Transverse colon (tissue), 4 donors: ENCODE measurements at regions of chr13 and their contacts with region 1.

Region 1: GRCh38 chr13:73465617-73465971 is 406.8 kb downstream of the KLF5 start:
- DNase-seq: peak; percentile 14
- H3K4me3 ChIP-seq: no peak overlapping the region
- H3K27ac ChIP-seq: peak overlapping the region; percentile 72 to 84 (median 82)
- H3K4me1 ChIP-seq: peaks cover 0 to 21% (median 11%) of the 10 kb centered on the region in 4 donors
- H3K27me3 ChIP-seq: no peaks in the 10 kb centered on the region
- CTCF ChIP-seq: peak in 4 of 5 experiments; percentile 11 to 61 (median 29)
- EP300 ChIP-seq: peak; percentile 2
- POLR2A ChIP-seq: no peak

Region 2: DNA sequence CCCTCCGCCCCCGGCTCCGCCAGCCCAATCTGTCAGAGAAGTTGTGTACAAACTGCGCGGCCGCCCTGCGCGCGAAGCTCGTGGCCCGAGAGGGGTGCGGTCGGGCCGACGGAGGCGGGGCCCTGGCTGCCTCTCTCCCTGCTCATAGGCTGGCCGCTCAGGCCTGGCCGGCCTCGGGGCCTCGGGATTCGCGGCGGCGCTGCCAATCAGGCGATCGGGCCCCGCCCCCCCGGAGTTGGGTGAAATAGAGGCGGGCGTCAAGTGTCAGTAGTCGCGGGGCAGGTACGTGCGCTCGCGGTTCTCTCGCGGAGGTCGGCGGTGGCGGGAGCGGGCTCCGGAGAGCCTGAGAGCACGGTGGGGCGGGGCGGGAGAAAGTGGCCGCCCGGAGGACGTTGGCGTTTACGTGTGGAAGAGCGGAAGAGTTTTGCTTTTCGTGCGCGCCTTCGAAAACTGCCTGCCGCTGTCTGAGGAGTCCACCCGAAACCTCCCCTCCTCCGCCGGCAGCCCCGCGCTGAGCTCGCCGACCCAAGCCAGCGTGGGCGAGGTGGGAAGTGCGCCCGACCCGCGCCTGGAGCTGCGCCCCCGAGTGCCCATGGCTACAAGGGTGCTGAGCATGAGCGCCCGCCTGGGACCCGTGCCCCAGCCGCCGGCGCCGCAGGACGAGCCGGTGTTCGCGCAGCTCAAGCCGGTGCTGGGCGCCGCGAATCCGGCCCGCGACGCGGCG is 406.7 kb before region 1 on chr13 and contains the start of gene KLF5:
- in situ Hi-C with region 1: loop called in 1 of 4 experiments (anchors 25 kb)
- intact Hi-C with region 1: no loop called
- DNase-seq: peak; percentile 98
- H3K4me3 ChIP-seq: peak within 1 kb of the TSS; percentile 78 to 97 (median 90)
- H3K27ac ChIP-seq: peak within 1 kb of the TSS; percentile 83 to 91 (median 90)
- H3K4me1 ChIP-seq: peaks cover 0 to 15% (median 4%) of the 10 kb centered on the region in 4 donors
- H3K27me3 ChIP-seq: peaks cover 3% of the 10 kb centered on the region
- CTCF ChIP-seq: no peak
- EP300 ChIP-seq: no peak
- POLR2A ChIP-seq: peak; percentile 100
- total RNA-seq, gene KLF5: 192 to 334 (median 270) TPM